ENCODE measurements at regions of chr6 and their contacts with region 1.

Region 1: GRCh38 chr6:52829046-52829817 is 11.4 kb downstream of the GSTA5 start:
- DNase-seq: peak in 1 of 5 donors; percentile 58
- ATAC-seq: no peak
- H3K4me3 ChIP-seq: no peak overlapping the region
- H3K27ac ChIP-seq: no peak overlapping the region
- H3K4me1 ChIP-seq: no peaks in the 10 kb centered on the region
- H3K27me3 ChIP-seq: no peaks in the 10 kb centered on the region
- CTCF ChIP-seq: no peak
- POLR2A ChIP-seq: no peak

Region 2: DNA sequence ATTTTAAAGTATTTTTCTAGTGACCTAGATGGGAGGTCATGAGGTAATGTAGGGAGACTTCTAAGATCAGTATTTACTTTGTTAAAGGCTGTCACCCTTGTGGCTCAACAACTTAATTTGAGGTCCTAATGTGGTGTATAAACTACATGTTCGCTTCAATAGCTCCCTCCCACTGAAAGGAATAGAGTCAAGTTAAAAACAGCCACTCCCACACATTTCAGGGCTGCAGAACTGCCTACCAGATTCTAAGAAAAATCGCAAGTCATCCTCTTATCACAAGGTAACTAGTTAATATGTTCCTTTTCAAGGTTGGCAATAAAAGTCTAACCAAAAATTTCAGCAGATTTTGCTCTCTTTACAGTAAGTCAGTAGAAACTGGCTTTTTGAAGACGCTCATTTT is 40.8 kb before region 1 on chr6:
- intact Hi-C with region 1: loop called in 3 of 10 experiments (anchors 2 to 5 kb)
- DNase-seq: no peak
- ATAC-seq: no peak
- H3K4me3 ChIP-seq: no peak overlapping the region
- H3K27ac ChIP-seq: no peak overlapping the region
- H3K4me1 ChIP-seq: no peaks in the 10 kb centered on the region
- H3K27me3 ChIP-seq: no peaks in the 10 kb centered on the region
- CTCF ChIP-seq: no peak
- POLR2A ChIP-seq: no peak

Measured in heart left ventricle (tissue), 16 donors.